ENCODE measurements at regions of chr11 and their contacts with region 1.

Region 1: DNA sequence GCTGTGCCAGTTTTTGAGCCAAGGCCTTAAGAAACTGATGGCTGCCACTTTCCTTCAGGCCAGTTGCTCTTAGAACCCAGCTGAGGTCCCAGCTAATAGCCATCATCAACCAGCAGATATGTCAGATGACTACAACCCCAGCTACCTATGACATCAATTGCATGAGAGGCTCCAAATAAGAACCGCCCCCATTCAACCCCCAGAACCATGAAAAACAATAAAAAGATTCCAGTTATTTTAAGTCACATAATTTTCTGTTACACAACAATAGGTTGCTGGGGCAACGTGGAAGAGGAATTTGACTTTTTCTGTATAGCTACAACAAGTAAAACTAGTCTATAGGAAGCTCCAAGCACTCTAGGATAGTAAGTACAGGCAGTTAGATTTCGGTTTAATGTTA is 216.3 kb upstream of the MTNR1B start:
- DNase-seq: no peak
- ATAC-seq: no peak
- H3K4me3 ChIP-seq: no peak overlapping the region
- H3K4me3 Mint-ChIP-seq: no peak overlapping the region
- H3K27ac ChIP-seq: no peak overlapping the region
- H3K27ac Mint-ChIP-seq: no peak overlapping the region
- H3K4me1 ChIP-seq: no peaks in the 10 kb centered on the region
- H3K4me1 Mint-ChIP-seq: no peaks in the 10 kb centered on the region
- H3K27me3 ChIP-seq: no peaks in the 10 kb centered on the region
- H3K27me3 Mint-ChIP-seq: peaks cover 0 to 1% of the 10 kb centered on the region in 2 donors

Region 2: GRCh38 chr11:91825777-91826176 is 927.4 kb before region 1 on chr11:
- CTCF ChIA-PET with region 1: no interaction called
- POLR2A ChIA-PET with region 1: interaction called in 1 of 2 experiments, 13 read pairs
- DNase-seq: no peak
- ATAC-seq: no peak
- H3K4me3 ChIP-seq: no peak overlapping the region
- H3K4me3 Mint-ChIP-seq: no peak overlapping the region
- H3K27ac ChIP-seq: no peak overlapping the region
- H3K27ac Mint-ChIP-seq: no peak overlapping the region
- H3K4me1 ChIP-seq: no peaks in the 10 kb centered on the region
- H3K4me1 Mint-ChIP-seq: no peaks in the 10 kb centered on the region
- H3K27me3 ChIP-seq: no peaks in the 10 kb centered on the region
- H3K27me3 Mint-ChIP-seq: no peaks in the 10 kb centered on the region

Measured in T-cell (primary cell).